RWPE1 (cell line): ENCODE measurements at regions of chr17 and their contacts with region 1.

Region 1: DNA sequence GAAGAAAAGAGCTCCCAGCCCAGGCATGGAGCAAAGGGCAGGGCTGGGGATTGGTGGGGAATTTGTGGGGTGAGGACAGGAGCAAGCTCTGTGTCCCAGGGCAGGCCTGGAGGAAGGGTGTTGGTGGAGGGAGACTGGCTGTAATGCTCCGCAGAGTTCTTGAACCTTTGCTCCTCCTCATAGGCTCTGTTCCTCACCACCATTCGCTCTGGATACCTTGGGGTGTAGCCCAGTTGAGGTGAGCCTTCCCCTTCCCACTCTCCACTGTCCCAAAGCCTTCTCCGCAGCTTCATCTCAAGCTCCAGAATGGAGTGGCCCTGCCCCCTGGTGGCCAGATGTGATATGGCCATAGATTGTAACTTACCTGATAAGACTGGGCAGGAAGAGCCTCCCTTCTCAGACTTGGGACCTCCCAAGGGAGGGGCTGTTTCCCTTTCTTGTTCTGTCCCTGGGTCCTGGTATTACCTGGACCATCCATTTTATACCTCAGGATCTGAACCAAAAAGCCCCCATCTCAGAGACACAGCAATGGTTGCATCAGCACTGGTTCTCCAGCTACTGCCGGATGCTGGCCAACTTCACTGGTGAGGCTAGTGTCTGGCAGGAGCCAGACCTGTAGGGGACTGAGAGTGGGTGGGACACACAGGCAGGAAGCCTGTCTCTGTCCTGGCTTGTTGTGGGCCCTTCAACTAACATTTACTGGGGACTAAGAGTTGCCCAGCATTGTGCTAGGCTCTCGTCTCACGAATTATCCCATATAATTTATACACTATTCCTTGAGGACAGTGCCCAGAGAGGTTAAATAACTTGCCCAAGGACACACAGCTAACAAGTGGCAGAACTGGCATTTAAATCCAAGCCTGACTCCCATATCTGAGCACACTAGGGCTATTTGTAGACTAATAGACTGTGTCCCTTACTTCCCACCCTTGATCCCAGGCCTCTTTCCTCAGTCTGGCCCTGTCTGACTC is 19.1 kb upstream of the STAC2 start:
- DNase-seq: peak; percentile 81
- H3K27ac ChIP-seq: peak overlapping the region; percentile 35
- CTCF ChIP-seq: peak; percentile 91

Region 2: GRCh38 chr17:38922538-38923297 is 322.2 kb before region 1 on chr17:
- CTCF ChIA-PET with region 1: no interaction called
- POLR2A ChIA-PET with region 1: no interaction called
- DNase-seq: no peak
- H3K27ac ChIP-seq: peak overlapping the region; percentile 50
- CTCF ChIP-seq: no peak

Region 3: DNA sequence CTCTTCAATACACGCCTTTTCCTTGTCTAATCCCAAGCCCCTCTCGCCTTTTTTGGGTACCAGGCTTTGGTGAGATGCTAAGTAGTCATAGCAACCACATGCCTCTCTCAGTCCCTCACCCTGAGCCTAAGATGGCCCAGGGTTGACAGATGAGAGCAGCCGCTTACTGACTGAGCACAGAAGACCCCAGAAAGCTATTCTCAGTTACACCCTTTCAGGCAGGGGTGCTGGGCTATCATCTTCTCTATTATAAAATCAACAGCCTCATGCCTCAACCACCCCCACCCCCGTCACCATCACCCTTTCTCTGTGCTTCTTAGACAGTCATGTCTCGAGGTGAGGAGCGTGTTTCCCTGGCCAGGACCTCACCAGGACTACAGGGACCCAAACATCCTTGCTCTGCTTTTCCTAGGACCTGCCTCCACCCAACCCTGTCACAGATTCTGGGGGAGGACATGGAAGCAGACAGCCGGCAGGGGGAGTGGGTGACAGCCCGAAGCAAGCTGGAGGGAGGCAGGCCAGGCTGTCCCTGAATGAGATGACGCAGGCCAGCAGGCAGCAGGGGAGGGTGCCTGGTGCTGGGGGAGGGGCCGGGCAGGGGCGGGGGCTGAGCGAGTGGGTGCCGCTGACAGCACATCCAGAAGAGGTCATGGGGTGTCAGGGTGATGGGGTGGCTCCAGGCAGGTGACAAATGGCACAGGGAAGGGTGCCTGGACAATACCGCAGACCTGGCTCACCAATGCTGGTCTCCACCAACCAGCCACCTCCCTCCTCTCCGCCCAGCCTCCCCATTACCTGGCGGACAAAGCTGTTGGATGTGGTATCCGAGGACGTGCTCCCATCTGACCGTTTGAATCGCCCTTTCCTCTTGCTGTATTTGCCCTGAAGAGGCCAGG is 50.5 kb before region 1 on chr17:
- CTCF ChIA-PET with region 1: interaction called, 10 read pairs
- POLR2A ChIA-PET with region 1: no interaction called
- DNase-seq: no peak
- H3K27ac ChIP-seq: peak overlapping the region; percentile 88
- CTCF ChIP-seq: no peak

Region 4: DNA sequence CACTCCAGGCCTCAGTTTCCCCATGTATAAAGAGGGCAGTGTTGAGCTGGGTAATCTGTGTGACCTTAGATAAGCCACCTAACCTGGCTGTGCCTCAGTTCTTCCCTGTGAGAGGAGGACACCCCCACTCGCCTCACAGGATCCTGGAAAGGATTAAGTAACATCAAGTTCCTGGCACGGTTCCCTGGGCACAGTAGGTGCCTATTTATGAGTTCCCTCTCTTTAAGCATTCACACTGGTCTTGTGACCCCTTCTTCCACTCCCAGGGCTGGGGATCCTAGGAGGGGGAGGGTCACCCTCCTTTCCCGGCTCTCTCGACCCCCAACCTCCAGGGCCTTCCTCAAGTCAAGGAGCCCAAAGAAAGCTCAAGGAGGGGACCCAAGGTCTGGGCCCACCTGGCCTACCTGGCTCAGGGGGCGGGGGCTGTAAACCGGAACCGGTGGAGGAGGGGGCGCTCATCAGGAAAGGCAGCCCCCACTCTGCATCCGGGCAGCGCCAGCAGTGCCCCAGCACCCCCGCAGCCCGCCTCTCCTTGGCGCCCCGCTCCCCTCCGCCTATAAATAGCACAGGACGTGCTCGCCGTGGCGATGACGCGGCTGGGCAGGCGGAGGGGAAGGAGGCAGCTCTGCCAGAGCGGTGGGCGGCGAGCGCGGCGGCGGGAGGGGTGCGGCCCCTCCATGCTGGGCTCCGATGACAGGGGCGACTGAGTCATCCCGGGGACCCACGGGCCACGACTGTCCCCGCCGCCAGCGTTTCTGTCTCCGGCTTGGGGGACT is 35.4 kb before region 1 on chr17:
- CTCF ChIA-PET with region 1: interaction called, 145 read pairs
- POLR2A ChIA-PET with region 1: no interaction called
- DNase-seq: no peak
- H3K27ac ChIP-seq: peak overlapping the region; percentile 60
- CTCF ChIP-seq: no peak

Region 5: DNA sequence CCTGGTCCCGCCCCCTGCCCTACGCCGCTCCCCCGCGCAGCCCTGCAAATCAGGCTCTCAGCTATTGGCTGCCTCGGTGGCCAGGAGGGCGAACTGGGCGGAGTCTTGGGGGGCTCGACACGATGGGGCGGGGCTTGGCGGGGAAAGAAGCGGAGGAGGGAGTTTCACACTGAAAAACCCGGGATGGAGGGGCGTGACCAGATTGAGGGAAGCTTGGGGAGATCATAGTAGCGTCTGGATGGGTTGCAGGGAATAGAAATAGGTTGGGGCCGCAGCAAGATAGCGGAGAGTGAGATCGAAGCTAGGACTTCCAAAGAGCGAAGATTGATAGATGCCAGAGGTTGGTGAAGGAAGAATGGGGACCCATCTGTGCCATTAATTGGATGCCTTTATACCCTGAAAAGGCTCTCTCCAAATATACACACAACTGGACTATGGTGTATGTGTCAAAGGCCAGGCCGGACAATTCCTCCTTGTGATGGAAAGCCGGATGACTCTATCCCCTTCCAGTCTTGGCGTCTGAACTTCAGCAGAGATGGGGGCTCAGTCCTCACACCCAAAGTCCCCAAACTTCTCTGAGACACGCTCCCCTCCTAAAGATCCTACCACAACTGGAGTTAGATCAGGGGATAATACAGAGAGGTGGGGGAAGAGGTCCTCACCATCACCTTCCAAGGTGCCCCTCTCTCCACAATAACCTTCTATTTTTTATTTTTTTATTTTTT is 18.8 kb before region 1 on chr17:
- CTCF ChIA-PET with region 1: interaction called, 10 read pairs
- POLR2A ChIA-PET with region 1: no interaction called
- DNase-seq: no peak
- H3K27ac ChIP-seq: no peak overlapping the region
- CTCF ChIP-seq: no peak